Mammary epithelial cell (primary cell): ENCODE measurements at regions of chr14 and their contacts with region 1.

Region 1: DNA sequence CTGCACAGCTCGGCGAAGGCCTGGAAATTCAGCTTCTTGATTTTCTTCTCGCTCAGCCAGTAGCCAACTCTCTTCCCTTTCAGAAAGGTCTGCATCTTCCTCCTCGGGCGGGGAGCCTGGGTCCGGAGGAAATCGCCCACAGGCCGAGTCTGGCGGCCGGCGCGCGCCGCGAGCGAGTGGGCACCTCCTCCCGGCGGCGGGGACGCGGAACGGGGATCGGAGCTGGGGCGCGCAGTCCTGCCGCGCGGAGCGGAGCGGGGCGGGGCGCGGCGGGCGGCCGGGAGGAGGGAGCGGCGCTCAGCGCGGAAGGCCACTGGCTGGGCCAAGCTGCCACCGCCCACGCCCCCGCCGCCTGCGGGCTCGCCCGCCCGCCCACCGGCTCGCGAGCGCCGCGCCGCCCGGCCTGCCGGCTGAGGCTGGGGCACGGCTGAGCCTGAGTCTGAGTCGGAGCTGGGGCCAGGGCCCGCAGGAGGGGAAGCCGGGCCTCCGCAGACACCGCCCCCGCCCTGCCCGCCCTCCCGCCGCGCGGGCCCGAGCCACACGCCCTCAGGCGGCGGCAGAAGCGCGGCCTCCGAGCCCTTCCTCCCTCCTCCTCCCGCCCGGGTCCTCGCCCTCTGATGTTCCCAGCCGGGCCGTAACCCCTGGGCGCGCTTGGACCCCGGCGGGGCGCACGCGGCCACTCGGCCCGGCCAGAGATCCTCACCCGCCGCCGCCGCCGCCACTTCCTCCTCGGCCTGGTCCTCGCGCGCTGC is 480 bp downstream of the ITPK1 start:
- DNase-seq: peak; percentile 84
- H3K4me3 ChIP-seq: peak overlapping the region; percentile 62 to 99 (median 74)
- H3K27ac ChIP-seq: peak overlapping the region; percentile 4
- H3K4me1 ChIP-seq: peaks cover 21% of the 10 kb centered on the region
- H3K27me3 ChIP-seq: no peaks in the 10 kb centered on the region
- CTCF ChIP-seq: no peak

Region 2: GRCh38 chr14:92819011-92819597 is 296.1 kb before region 1 on chr14:
- CTCF ChIA-PET with region 1: no interaction called
- dilution Hi-C with region 1: no loop called
- in situ Hi-C with region 1: no loop called
- intact Hi-C with region 1: no loop called
- DNase-seq: no peak
- H3K4me3 ChIP-seq: no peak overlapping the region
- H3K27ac ChIP-seq: no peak overlapping the region
- H3K4me1 ChIP-seq: no peaks in the 10 kb centered on the region
- H3K27me3 ChIP-seq: no peaks in the 10 kb centered on the region
- CTCF ChIP-seq: no peak

Region 3: DNA sequence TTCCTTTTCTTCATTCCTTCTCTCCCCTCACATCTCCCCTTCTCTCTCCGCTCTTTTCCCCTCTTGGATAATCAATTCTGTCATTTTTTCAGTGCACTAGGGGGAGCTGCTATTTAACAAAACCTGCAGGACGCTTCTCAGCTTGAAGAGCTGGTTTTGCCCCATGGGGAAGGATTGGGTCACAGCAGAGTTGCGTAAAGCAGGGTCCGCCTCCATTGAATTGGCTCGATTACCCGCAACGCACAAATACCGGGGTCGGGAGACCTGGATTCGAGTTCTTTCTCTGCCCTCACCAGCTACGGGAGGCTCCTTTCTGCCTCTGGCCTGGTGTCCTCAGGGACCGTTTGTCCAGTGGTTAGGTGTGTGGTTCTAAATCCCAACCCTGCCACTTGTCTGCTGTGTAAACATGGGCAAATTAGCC is 234.4 kb before region 1 on chr14:
- CTCF ChIA-PET with region 1: no interaction called
- dilution Hi-C with region 1: no loop called
- in situ Hi-C with region 1: no loop called
- intact Hi-C with region 1: loop called (anchors 1 kb)
- DNase-seq: peak; percentile 58
- H3K4me3 ChIP-seq: no peak overlapping the region
- H3K27ac ChIP-seq: no peak overlapping the region
- H3K4me1 ChIP-seq: no peaks in the 10 kb centered on the region
- H3K27me3 ChIP-seq: peaks cover 2% of the 10 kb centered on the region
- CTCF ChIP-seq: peak; percentile 55 to 65

Region 4: DNA sequence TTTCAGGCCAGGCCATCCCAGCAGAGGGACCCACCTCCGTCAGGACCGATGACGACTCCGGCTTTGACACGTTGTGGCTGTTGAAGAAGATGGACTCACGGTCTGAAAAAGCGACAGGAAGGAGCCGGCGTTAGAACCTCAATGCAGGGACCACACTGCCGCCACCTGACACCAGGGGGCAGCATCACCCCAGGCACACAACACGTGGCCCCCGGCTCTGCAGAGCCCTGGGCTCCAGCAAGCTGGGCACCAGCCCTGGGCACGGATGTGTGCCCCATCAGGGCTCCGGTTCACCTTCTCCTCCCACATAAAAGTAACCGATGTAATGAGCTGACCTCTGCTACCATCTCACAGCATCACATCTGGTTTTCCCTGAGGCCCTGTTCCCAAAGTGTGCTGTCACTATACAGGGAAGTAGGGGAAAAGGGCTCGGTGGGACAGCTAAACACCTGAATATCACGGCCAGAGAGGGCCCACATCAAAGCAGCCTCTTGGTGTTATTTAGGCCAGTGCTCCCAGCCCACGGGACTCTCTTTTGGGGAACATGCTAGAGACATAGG is 163.3 kb before region 1 on chr14:
- CTCF ChIA-PET with region 1: interaction called, 4 read pairs
- dilution Hi-C with region 1: no loop called
- in situ Hi-C with region 1: loop called in 1 of 2 experiments (anchors 25 kb)
- intact Hi-C with region 1: loop called (anchors 1 kb)
- DNase-seq: peak; percentile 40
- H3K4me3 ChIP-seq: no peak overlapping the region
- H3K27ac ChIP-seq: no peak overlapping the region
- H3K4me1 ChIP-seq: no peaks in the 10 kb centered on the region
- H3K27me3 ChIP-seq: no peaks in the 10 kb centered on the region
- CTCF ChIP-seq: peak; percentile 85 to 92

Region 5: DNA sequence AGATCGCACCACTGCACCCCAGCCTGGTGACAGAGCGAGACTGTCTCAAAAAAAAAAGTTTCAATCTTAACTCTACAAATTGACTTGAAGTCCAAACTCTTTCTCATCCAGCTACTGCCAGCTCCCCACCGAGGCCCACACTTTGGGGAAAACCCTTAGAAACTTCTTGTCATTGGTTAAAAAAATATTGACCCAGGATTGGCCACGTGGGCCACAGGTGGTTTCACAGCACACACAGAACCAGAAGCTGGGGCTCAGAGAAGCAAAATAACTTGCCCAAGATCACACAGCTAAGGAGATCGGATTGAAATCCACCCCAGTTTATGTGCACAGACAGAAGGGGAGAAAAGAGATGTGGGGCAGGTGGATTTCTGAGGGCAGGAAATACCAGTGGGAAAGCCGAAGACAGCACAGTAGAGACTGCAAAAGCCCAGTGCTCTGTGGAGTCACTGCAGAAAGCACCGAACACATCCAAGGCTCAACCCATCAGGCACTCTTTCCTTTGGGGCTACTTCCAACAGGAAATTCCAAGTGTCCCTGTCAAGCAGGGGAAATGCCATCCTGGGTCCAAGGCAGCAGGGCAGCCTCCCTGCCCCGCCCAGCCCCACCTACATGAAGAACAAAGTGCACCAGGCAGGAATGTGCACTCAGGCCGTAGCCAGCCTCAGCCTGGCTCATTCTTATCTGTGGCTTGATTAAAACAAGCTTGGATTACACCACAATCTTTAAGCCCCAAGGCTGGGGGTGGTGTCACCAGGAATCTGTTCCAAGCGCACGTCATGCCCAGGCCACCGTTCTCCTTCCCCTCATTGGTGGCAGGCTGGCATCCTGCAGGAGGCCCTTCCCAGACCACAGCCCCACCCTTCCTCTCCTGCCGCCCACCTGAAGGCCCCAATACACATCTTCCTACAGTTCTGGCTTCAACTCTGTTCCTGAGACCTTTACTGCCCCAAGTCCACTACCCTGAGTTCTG is 72.0 kb before region 1 on chr14:
- CTCF ChIA-PET with region 1: no interaction called
- dilution Hi-C with region 1: loop called (anchors 5 kb)
- in situ Hi-C with region 1: no loop called
- intact Hi-C with region 1: loop called (anchors 2 kb)
- DNase-seq: peak; percentile 96
- H3K4me3 ChIP-seq: peak overlapping the region in 1 of 3 experiments; percentile 16
- H3K27ac ChIP-seq: peak overlapping the region; percentile 97
- H3K4me1 ChIP-seq: peaks cover 79% of the 10 kb centered on the region
- H3K27me3 ChIP-seq: no peaks in the 10 kb centered on the region
- CTCF ChIP-seq: no peak

Region 6: GRCh38 chr14:93137864-93138263 is 22.6 kb after region 1 on chr14:
- CTCF ChIA-PET with region 1: interaction called, 7 read pairs
- dilution Hi-C with region 1: no loop called
- in situ Hi-C with region 1: no loop called
- intact Hi-C with region 1: loop called (anchors 1 kb)
- DNase-seq: peak; percentile 13
- H3K4me3 ChIP-seq: no peak overlapping the region
- H3K27ac ChIP-seq: no peak overlapping the region
- H3K4me1 ChIP-seq: peaks cover 6% of the 10 kb centered on the region
- H3K27me3 ChIP-seq: no peaks in the 10 kb centered on the region
- CTCF ChIP-seq: no peak

Region 7: GRCh38 chr14:93195316-93195999 is 80.2 kb after region 1 on chr14:
- CTCF ChIA-PET with region 1: no interaction called
- dilution Hi-C with region 1: loop called (anchors 5 kb)
- in situ Hi-C with region 1: no loop called
- intact Hi-C with region 1: no loop called
- DNase-seq: no peak
- H3K4me3 ChIP-seq: no peak overlapping the region
- H3K27ac ChIP-seq: no peak overlapping the region
- H3K4me1 ChIP-seq: no peaks in the 10 kb centered on the region
- H3K27me3 ChIP-seq: no peaks in the 10 kb centered on the region
- CTCF ChIP-seq: no peak

Region 8: DNA sequence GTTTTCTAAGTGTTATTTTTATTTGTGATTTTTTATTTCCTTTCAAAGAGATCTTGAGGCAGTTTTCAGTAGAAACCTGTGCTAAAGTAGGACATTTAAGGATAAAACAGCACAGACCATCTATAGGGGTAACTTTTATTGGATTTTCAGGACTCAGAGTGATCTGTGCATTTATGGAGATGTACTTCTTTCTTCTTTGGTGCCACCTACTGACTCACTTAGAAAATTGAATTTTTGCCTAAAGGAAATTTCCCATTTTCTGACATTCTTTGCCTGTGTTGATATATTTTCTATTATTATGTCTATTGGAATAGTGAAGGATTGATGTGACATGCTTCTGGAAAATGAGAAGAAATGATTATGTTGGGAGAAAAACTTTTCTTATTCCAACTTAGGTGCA is 428.5 kb after region 1 on chr14:
- CTCF ChIA-PET with region 1: no interaction called
- dilution Hi-C with region 1: no loop called
- in situ Hi-C with region 1: no loop called
- intact Hi-C with region 1: loop called (anchors 5 kb)
- DNase-seq: peak; percentile 5
- H3K4me3 ChIP-seq: no peak overlapping the region
- H3K27ac ChIP-seq: no peak overlapping the region
- H3K4me1 ChIP-seq: no peaks in the 10 kb centered on the region
- H3K27me3 ChIP-seq: no peaks in the 10 kb centered on the region
- CTCF ChIP-seq: peak; percentile 51